ENCODE measurements at regions of chr18 and their contacts with region 1.

Region 1: GRCh38 chr18:62499263-62499650 is 23.6 kb upstream of the ZCCHC2 start:
- DNase-seq: no peak
- H3K4me3 ChIP-seq: no peak overlapping the region
- CTCF ChIP-seq: no peak

Region 2: DNA sequence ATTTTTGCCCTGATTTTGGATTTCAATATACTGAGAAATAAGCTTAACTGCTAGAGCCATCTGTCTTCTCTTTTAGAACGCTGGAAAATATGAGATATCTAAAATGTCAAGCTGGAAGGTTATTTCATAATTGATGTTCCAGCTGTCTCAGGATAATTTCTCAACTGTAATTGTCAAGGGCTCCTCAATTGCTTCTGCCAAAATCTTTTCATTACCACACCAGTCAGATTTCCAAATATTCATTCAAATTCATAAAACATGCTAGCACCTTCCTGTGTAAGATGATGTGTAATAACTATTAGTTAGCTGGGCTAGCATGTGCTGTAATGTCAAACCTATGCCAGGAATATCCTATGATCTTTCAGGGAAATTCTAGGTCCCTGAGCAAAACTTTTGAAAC is 86.1 kb before region 1 on chr18:
- in situ Hi-C with region 1: loop called (anchors 5 kb)
- DNase-seq: no peak
- H3K4me3 ChIP-seq: no peak overlapping the region
- CTCF ChIP-seq: no peak